ENCODE measurements at regions of chr17 and their contacts with region 1.

Region 1: GRCh38 chr17:5413682-5414081 is 5.8 kb downstream of the NUP88 start:
- DNase-seq: no peak
- ATAC-seq: peak; percentile 76
- H3K4me3 Mint-ChIP-seq: peak overlapping the region; percentile 10
- H3K27ac Mint-ChIP-seq: peak overlapping the region; percentile 83
- H3K4me1 Mint-ChIP-seq: peaks cover 59% of the 10 kb centered on the region
- H3K27me3 Mint-ChIP-seq: no peaks in the 10 kb centered on the region

Region 2: DNA sequence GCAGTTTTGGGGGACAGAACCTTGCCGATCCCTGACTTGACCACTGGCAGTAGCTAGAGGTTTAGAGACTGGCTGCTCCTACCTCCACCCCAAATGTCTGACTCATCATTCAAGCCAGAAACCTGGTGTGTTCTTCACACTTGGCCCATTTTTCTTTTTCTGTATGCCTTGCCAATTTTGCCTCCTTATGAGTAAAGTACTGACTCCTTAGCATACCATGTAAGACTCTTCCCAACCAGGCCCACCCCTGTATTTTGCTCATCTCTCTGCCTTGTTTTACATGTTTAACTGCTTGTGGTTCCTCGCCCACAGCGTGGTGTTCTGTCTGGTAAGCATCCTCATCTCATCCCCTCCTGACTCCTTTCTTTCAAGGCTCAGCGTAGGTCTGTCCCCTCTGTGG is 32.1 kb before region 1 on chr17:
- CTCF ChIA-PET with region 1: no interaction called
- POLR2A ChIA-PET with region 1: no interaction called
- intact Hi-C with region 1: loop called in 1 of 2 experiments (anchors 2 kb)
- DNase-seq: peak; percentile 14
- ATAC-seq: peak; percentile 19
- H3K4me3 Mint-ChIP-seq: no peak overlapping the region
- H3K27ac Mint-ChIP-seq: peak overlapping the region; percentile 37
- H3K4me1 Mint-ChIP-seq: peaks cover 4% of the 10 kb centered on the region
- H3K27me3 Mint-ChIP-seq: no peaks in the 10 kb centered on the region

Measured in activated CD4-positive, alpha-beta T cell treated with anti-CD3 and anti-CD28 coated beads for 36 hours (primary cell).